ENCODE measurements at regions of chr7 and their contacts with region 1.

Region 1: GRCh38 chr7:96674565-96674964 is 35.1 kb downstream of the SEM1 start:
- DNase-seq: peak; percentile 76
- H3K4me3 ChIP-seq: no peak overlapping the region
- H3K27ac ChIP-seq: peak overlapping the region; percentile 36
- H3K4me1 ChIP-seq: peaks cover 28% of the 10 kb centered on the region
- H3K27me3 ChIP-seq: no peaks in the 10 kb centered on the region
- CTCF ChIP-seq: no peak
- POLR2A ChIP-seq: no peak

Region 2: DNA sequence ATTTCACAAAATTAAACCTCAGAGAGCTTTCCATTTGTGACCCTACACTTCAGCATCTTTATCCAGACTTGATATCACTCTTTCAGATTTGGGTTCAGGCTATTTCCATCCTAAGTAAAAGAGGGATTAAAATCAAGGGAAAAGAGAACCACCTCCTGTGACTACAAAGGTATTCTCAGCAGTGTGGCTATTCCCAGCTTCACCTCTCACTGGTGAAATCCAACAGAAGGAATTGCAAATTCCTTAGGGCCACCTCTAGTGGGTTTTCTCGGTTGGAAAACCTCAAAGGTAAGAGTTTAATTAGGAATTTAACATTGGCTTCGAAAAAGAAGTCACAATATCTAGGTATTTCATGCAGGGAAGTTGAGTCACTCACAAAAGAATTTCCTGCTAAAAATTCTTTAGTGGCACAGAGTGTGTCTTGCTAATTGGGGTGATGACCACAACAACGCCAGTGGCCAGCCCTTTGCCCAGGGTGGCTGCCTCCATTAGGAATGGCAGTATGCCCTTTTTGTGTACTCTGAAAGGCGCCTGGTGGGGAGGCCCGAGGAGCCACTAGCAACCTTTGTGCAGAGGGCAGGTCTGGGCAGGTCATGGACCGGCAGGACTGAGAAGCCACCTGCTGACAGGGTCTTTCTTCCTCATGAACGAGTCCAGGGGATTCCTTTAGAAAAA is 17.1 kb before region 1 on chr7:
- CTCF ChIA-PET with region 1: no interaction called
- POLR2A ChIA-PET with region 1: no interaction called
- dilution Hi-C with region 1: no loop called
- intact Hi-C with region 1: loop called (anchors 1 kb)
- DNase-seq: peak; percentile 41
- H3K4me3 ChIP-seq: no peak overlapping the region
- H3K27ac ChIP-seq: peak overlapping the region; percentile 25
- H3K4me1 ChIP-seq: peaks cover 21% of the 10 kb centered on the region
- H3K27me3 ChIP-seq: no peaks in the 10 kb centered on the region
- CTCF ChIP-seq: no peak
- POLR2A ChIP-seq: no peak

Measured in endothelial cell of umbilical vein (primary cell).